ENCODE measurements at regions of chr12 and their contacts with region 1.

Region 1: GRCh38 chr12:75390899-75391538 is at the start of gene GLIPR1L2:
- DNase-seq: peak; percentile 97 to 99 (median 98)
- ATAC-seq: peak; percentile 100
- H3K4me3 ChIP-seq: peak within 1 kb of the TSS; percentile 74
- H3K27ac ChIP-seq: peak within 1 kb of the TSS; percentile 94
- H3K4me1 ChIP-seq: no peaks in the 10 kb centered on the region
- H3K27me3 ChIP-seq: no peaks in the 10 kb centered on the region
- total RNA-seq, gene GLIPR1L2: 1.8 to 2.8 (median 2.4) TPM

Region 2: GRCh38 chr12:75334384-75335030 is 56.5 kb before region 1 on chr12 and contains the start of gene GLIPR1L1:
- intact Hi-C with region 1: loop called in 2 of 4 experiments (anchors 5 kb)
- DNase-seq: peak; percentile 89 to 92 (median 89)
- ATAC-seq: peak; percentile 90 to 95
- H3K4me3 ChIP-seq: peak within 1 kb of the TSS; percentile 44
- H3K27ac ChIP-seq: no peak within 1 kb of the TSS
- H3K4me1 ChIP-seq: no peaks in the 10 kb centered on the region
- H3K27me3 ChIP-seq: no peaks in the 10 kb centered on the region
- total RNA-seq, gene GLIPR1L1: not detected

Region 3: GRCh38 chr12:75480469-75480949 is 89.5 kb after region 1 on chr12 and contains the start of gene GLIPR1:
- intact Hi-C with region 1: loop called in 2 of 4 experiments (anchors 10 kb)
- DNase-seq: peak; percentile 82 to 87 (median 83)
- ATAC-seq: peak; percentile 95 to 96
- H3K4me3 ChIP-seq: peak within 1 kb of the TSS; percentile 60
- H3K27ac ChIP-seq: no peak within 1 kb of the TSS
- H3K4me1 ChIP-seq: peaks cover 2% of the 10 kb centered on the region
- H3K27me3 ChIP-seq: no peaks in the 10 kb centered on the region
- total RNA-seq, gene GLIPR1: 12.0 to 23.5 (median 16.7) TPM